ENCODE measurements at regions of chr14 and their contacts with region 1.

Region 1: GRCh38 chr14:79510659-79511058 is 700.6 kb downstream of the DIO2 start:
- DNase-seq: no peak
- ATAC-seq: no peak
- H3K4me3 ChIP-seq: no peak overlapping the region
- H3K27ac ChIP-seq: no peak overlapping the region
- H3K4me1 ChIP-seq: no peaks in the 10 kb centered on the region
- H3K27me3 ChIP-seq: no peaks in the 10 kb centered on the region

Region 2: DNA sequence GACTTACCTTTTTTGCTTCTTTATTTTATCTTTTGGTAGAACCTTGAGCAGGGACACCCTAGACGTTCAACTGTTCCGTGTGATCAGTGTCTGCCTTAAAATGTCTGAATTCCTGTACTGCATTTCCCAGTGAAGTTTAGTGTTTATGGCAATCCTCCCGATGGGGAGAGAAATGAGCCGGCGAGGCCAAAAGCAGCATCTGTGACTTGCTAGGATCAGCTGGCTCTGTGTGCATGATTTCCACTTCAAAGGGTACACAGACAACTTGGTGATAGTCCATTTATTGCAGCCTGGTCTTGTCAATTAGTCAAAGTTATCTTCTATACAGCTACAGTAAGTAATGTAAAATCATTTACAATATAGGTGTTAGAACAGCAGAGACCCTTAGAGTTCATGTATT is 67.9 kb before region 1 on chr14:
- intact Hi-C with region 1: no loop called
- DNase-seq: no peak
- ATAC-seq: no peak
- H3K4me3 ChIP-seq: no peak overlapping the region
- H3K27ac ChIP-seq: no peak overlapping the region
- H3K4me1 ChIP-seq: peaks cover 0 to 2% of the 10 kb centered on the region in 2 donors
- H3K27me3 ChIP-seq: no peaks in the 10 kb centered on the region

Region 3: DNA sequence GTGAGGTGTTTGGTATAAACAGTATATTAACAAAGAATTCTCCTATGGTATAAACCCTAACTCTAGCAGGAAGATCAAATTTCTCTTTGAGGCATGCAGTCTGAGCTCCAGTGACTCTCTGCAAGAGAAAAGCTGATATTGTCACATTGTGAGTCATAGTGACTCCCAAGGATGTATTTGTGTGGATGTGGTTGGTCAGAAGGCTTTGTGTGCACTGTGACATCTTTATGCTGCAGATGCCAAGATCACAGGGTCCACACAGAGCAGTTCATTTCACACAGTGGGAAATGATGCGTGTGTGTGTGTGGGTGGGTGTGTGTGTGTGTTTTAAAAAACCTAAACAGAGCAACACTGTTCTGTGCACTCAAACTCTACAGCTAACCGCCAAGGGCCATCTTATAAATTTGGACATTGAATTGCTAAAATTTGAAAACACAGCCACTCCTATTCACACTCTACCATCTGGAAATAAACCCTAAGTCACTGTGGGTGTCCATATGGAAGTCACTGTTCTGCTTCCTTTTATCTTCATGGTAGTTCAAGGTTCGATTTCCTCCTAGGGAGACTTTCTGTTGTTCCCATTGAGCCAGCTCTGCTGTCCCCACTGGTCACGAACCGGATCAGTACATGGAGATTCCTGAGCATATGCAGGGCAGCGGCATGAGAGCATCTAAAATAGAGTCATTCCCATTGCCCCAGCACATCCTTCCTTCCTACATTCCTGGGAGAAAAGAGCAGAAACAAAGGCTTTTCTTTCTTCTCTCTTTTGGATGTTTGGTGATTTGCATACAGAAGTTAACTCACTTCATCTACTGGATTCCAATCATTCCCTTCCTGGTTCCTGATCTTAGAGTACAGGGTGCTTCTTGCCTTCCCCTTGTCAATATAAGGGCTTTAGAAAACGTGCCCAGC is 26.9 kb before region 1 on chr14:
- intact Hi-C with region 1: loop called in 1 of 2 experiments (anchors 1 kb)
- DNase-seq: no peak
- ATAC-seq: no peak
- H3K4me3 ChIP-seq: no peak overlapping the region
- H3K27ac ChIP-seq: no peak overlapping the region
- H3K4me1 ChIP-seq: no peaks in the 10 kb centered on the region
- H3K27me3 ChIP-seq: no peaks in the 10 kb centered on the region

Region 4: DNA sequence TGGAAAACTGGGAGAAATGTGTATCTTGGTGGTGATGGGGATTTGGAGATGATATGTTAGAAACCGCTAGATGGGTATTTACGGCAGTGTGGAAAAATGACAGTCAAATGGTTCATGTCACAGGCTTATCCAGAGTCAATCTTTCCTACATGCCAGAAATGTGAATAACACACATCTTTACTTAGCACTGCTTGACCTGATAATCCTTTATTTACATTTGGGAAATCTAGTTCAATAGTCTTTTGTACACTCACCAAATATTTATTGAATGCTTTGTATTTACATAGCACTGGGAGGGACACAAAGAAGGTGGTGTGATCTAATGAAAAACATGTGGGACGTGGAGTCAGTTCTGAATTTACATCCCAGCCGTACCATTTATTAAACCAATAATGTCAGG is 492.5 kb after region 1 on chr14:
- intact Hi-C with region 1: loop called in 1 of 2 experiments (anchors 10 kb)
- DNase-seq: no peak
- ATAC-seq: no peak
- H3K4me3 ChIP-seq: no peak overlapping the region
- H3K27ac ChIP-seq: no peak overlapping the region
- H3K4me1 ChIP-seq: no peaks in the 10 kb centered on the region
- H3K27me3 ChIP-seq: no peaks in the 10 kb centered on the region